ENCODE measurements at regions of chr11 and their contacts with region 1.

Region 1: GRCh38 chr11:13210424-13210823 is 67.2 kb upstream of the BMAL1 start:
- DNase-seq: peak; percentile 39
- H3K4me3 Mint-ChIP-seq: no peak overlapping the region
- H3K27ac Mint-ChIP-seq: no peak overlapping the region
- H3K4me1 Mint-ChIP-seq: peaks cover 36% of the 10 kb centered on the region
- H3K27me3 Mint-ChIP-seq: peaks cover 3% of the 10 kb centered on the region

Region 2: DNA sequence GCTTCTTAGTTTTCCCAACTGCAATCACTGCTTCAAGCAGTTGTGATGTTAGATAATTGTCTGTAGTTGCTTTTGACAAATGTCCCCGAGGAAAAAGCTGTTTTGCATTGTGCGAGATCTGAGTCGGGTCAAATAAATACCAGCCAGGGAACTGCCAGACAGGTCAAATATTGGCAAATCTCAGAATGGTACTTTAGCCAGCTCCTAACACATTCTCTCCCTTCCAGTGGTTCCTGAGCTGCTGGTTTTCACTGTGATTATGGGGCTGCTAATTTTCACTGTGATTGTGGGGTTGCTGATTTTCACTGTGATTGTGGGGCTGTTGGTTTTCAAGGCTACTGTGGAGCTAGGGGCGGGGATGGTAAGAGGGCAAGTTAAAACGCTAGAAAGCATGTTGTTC is 187.0 kb before region 1 on chr11:
- CTCF ChIA-PET with region 1: no interaction called
- POLR2A ChIA-PET with region 1: no interaction called
- DNase-seq: no peak
- H3K4me3 Mint-ChIP-seq: no peak overlapping the region
- H3K27ac Mint-ChIP-seq: no peak overlapping the region
- H3K4me1 Mint-ChIP-seq: no peaks in the 10 kb centered on the region
- H3K27me3 Mint-ChIP-seq: peaks cover 44% of the 10 kb centered on the region

Region 3: GRCh38 chr11:13140028-13140870 is 70.2 kb before region 1 on chr11:
- CTCF ChIA-PET with region 1: no interaction called
- POLR2A ChIA-PET with region 1: no interaction called
- DNase-seq: no peak
- H3K4me3 Mint-ChIP-seq: no peak overlapping the region
- H3K27ac Mint-ChIP-seq: no peak overlapping the region
- H3K4me1 Mint-ChIP-seq: peaks cover 4% of the 10 kb centered on the region
- H3K27me3 Mint-ChIP-seq: peaks cover 15% of the 10 kb centered on the region

Region 4: DNA sequence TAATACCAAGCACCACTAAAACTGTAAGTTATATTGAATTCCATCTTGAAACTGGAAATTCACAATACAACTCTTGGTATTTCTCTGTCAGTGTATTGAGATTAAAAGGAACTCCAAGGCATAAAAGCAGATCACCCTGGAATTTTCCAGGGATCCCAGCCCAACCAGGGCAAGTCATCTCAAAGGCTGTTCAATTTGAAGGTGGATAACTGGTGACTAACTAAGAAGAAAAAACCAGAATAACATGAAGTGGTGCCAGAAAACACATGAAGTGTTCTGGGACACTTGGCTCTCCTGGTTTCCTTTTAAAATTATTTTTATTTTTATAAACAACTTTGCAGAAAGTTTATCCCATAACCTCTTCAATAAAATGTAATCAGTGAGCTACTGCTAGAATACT is 59.4 kb after region 1 on chr11:
- CTCF ChIA-PET with region 1: no interaction called
- POLR2A ChIA-PET with region 1: no interaction called
- DNase-seq: no peak
- H3K4me3 Mint-ChIP-seq: no peak overlapping the region
- H3K27ac Mint-ChIP-seq: no peak overlapping the region
- H3K4me1 Mint-ChIP-seq: peaks cover 6% of the 10 kb centered on the region
- H3K27me3 Mint-ChIP-seq: peaks cover 59% of the 10 kb centered on the region

Region 5: DNA sequence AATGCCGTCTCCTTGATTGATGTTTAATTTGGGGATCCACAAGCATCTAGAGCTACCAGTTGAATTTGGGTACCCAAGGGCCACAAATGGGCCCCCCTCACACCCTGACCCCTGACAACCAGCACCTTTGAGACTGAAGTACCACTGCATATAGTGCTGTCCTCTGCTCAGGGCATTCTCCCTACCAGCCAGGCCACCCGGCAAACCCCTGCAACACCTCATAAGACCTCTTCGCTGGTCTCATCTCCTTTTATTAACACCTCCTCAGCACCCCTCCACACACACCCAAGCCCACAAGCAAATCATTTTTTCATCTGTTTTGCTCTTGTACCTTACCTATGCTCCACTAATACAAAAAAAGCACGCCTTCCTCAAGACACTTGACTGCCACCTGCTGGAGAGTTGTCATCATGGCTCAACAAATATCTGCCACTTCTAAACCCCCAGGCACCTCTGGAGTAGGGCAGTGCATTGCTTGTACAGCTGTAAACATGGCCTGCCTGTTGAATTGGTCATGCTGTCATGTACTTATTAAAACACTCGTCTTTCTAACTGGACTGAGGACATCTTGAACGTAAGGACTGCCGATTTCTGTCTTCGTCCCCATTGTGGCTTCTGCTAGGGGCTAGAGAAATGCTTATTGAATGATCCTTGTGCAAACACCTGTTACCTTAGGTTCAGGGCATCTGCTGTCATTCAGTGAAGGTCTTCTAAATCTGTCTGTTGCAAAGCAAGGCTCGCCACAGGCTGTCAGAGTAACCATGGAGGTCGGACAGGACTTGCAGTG is 133.7 kb after region 1 on chr11:
- CTCF ChIA-PET with region 1: interaction called, 11 read pairs
- POLR2A ChIA-PET with region 1: interaction called, 4 read pairs
- DNase-seq: peak; percentile 76
- H3K4me3 Mint-ChIP-seq: no peak overlapping the region
- H3K27ac Mint-ChIP-seq: no peak overlapping the region
- H3K4me1 Mint-ChIP-seq: peaks cover 41% of the 10 kb centered on the region
- H3K27me3 Mint-ChIP-seq: no peaks in the 10 kb centered on the region

Region 6: DNA sequence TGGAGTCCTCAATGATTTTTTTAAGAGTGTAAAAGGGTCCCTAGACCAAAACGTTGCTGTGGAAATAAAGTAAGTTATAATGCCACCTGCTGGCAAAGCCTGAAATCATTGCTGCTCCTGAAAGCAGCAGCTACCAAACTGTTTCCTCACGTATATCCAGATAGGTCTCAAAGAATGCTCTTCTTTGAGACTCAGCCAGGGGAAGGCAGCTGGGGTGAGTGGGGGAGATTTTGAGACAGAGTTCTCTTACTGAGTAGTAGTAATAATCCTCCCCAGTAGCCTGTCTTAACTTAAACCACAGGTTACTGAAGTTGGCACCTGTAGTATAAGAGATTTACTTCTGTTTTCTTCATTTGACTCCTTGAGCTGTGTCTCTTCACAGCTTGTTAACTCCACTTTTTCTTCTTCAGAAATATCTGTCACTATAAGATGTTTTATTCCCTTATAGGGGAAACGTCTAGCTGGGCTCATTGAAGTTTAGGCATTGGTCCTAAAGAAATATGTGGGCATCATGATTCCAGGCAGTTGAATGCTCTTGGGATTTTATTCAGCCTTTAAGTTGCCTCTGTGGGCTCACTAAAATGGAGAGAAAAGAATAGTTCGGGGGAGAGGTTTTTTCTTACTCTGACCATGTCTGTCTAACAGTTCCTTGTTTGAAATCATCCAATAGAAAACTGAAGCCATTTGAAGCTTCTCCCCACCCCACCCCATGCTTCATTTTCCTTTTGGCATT is 174.7 kb after region 1 on chr11:
- CTCF ChIA-PET with region 1: interaction called, 22 read pairs
- POLR2A ChIA-PET with region 1: interaction called, 3 read pairs
- DNase-seq: no peak
- H3K4me3 Mint-ChIP-seq: no peak overlapping the region
- H3K27ac Mint-ChIP-seq: no peak overlapping the region
- H3K4me1 Mint-ChIP-seq: no peaks in the 10 kb centered on the region
- H3K27me3 Mint-ChIP-seq: no peaks in the 10 kb centered on the region

Measured in activated CD4-positive, alpha-beta memory T cell treated with anti-CD3 and anti-CD28 coated beads, Interleukin-2, amount 10 ng/mL, durations not matched to agents 7 days and 5 days (primary cell).